ENCODE measurements at regions of chr9 and their contacts with region 1.

Region 1: DNA sequence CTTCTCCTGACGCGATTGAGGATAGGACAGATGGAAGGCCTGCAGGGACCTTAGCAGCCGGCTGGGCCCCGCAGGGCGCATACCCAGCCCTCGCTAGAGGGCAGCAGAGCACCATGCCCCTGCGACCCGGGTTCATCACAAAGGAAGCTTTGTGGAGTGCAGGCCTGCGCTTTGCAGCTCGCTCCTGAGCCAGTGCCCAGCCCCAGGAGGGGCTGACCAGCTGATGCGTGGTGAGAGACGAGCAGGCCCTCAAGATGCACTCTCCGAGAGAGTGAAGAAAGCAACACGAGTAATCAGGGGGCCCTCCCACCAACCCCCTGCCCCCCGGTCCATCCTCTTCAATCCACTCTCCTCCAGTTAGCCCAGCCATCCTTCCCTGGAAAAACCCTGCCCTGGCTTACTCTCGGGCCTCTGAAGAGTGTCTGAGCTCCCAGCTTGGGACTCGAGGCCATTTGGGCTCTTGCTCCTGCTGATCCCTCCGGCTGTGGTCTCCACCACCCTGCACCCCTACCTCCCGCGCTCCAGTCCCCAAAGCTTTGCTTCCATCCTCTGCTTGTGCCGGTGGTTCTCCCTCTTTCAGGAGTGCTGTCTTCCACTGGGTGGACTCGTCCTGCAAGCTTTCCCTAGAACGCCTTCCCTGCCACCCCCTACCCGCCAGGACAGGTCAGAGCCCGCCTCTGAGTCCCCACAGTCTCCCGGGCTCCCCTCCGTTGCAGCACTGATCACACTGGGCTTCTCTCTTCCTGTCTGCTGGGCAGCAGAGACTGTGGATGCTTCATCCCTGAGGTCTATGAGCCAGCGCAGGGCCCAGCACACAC is 9.1 kb upstream of the KIF12 start:
- DNase-seq: peak; percentile 78
- H3K4me3 Mint-ChIP-seq: no peak overlapping the region
- H3K27ac Mint-ChIP-seq: no peak overlapping the region
- H3K4me1 Mint-ChIP-seq: no peaks in the 10 kb centered on the region
- H3K27me3 Mint-ChIP-seq: peaks cover 6% of the 10 kb centered on the region

Region 2: GRCh38 chr9:113632776-113633590 is 475.2 kb before region 1 on chr9:
- CTCF ChIA-PET with region 1: no interaction called
- intact Hi-C with region 1: no loop called
- DNase-seq: peak; percentile 25
- H3K4me3 Mint-ChIP-seq: no peak overlapping the region
- H3K27ac Mint-ChIP-seq: no peak overlapping the region
- H3K4me1 Mint-ChIP-seq: peaks cover 2% of the 10 kb centered on the region
- H3K27me3 Mint-ChIP-seq: no peaks in the 10 kb centered on the region

Region 3: DNA sequence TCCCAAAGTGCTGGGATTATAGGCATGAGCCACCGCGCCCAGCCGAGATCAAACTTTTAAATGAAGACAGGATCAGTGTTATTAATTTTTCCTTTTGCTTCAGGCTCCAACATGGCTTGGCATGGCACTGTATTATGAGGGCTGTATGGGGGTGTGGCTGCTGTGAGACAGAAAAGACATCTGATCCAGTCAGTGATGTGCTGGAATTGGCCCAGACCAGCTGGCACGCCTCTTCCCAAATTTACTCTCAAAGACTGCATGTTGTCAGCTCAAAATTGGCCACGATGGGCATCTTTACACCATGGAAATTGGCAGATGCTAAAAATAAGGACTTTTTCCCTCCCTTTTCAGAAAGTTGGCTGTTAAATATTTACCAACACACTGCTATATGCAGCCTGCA is 35.0 kb after region 1 on chr9:
- CTCF ChIA-PET with region 1: interaction called, 12 read pairs
- intact Hi-C with region 1: no loop called
- DNase-seq: no peak
- H3K4me3 Mint-ChIP-seq: no peak overlapping the region
- H3K27ac Mint-ChIP-seq: no peak overlapping the region
- H3K4me1 Mint-ChIP-seq: no peaks in the 10 kb centered on the region
- H3K27me3 Mint-ChIP-seq: peaks cover 9% of the 10 kb centered on the region

Region 4: GRCh38 chr9:114155263-114155972 is 47.2 kb after region 1 on chr9 and contains the start of gene COL27A1:
- CTCF ChIA-PET with region 1: interaction called, 7 read pairs
- intact Hi-C with region 1: loop called (anchors 1 kb)
- DNase-seq: peak; percentile 87
- H3K4me3 Mint-ChIP-seq: peak within 1 kb of the TSS; percentile 81
- H3K27ac Mint-ChIP-seq: peak within 1 kb of the TSS; percentile 62
- H3K4me1 Mint-ChIP-seq: peaks cover 16% of the 10 kb centered on the region
- H3K27me3 Mint-ChIP-seq: peaks cover 27% of the 10 kb centered on the region
- total RNA-seq, gene COL27A1: 7.0 to 10.6 TPM

Region 5: GRCh38 chr9:114304416-114305188 is 196.4 kb after region 1 on chr9:
- CTCF ChIA-PET with region 1: no interaction called
- intact Hi-C with region 1: loop called (anchors 1 kb)
- DNase-seq: no peak
- H3K4me3 Mint-ChIP-seq: no peak overlapping the region
- H3K27ac Mint-ChIP-seq: no peak overlapping the region
- H3K4me1 Mint-ChIP-seq: peaks cover 4% of the 10 kb centered on the region
- H3K27me3 Mint-ChIP-seq: no peaks in the 10 kb centered on the region

Measured in activated naive CD4-positive, alpha-beta T cell treated with anti-CD3 and anti-CD28 coated beads for 36 hours (primary cell).